ENCODE measurements at regions of chr3 and their contacts with region 1.

Region 1: GRCh38 chr3:180640987-180641386 is 38.3 kb downstream of the CCDC39 start:
- DNase-seq: no peak
- H3K4me3 ChIP-seq: no peak overlapping the region
- H3K27ac ChIP-seq: no peak overlapping the region
- H3K4me1 ChIP-seq: no peaks in the 10 kb centered on the region
- H3K27me3 ChIP-seq: no peaks in the 10 kb centered on the region
- CTCF ChIP-seq: no peak
- POLR2A ChIP-seq: no peak

Region 2: GRCh38 chr3:180467177-180467576 is 173.8 kb before region 1 on chr3:
- intact Hi-C with region 1: no loop called
- DNase-seq: no peak
- H3K4me3 ChIP-seq: no peak overlapping the region
- H3K27ac ChIP-seq: no peak overlapping the region
- H3K4me1 ChIP-seq: no peaks in the 10 kb centered on the region
- H3K27me3 ChIP-seq: no peaks in the 10 kb centered on the region
- CTCF ChIP-seq: no peak
- POLR2A ChIP-seq: no peak

Region 3: DNA sequence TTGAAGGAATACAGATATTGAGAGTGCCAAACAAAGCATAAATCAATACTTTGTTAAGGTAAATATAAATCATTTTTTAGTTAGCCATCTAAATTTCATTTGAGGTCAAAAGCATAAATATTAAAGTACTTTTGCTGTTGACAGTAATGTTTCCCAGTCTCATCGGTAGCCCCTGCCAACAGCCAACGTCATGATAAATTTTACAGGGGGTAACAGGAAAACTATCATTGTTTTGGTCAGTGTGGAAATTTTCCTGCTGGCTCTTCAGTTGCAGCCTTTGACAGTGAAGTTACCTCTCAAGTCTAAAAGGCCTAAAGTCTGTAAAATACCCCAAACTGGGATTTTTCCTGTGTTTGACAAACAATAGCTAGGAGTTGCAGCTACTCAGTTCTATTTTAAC is 76.3 kb before region 1 on chr3:
- intact Hi-C with region 1: loop called (anchors 5 kb)
- DNase-seq: no peak
- H3K4me3 ChIP-seq: no peak overlapping the region
- H3K27ac ChIP-seq: no peak overlapping the region
- H3K4me1 ChIP-seq: no peaks in the 10 kb centered on the region
- H3K27me3 ChIP-seq: no peaks in the 10 kb centered on the region
- CTCF ChIP-seq: no peak
- POLR2A ChIP-seq: no peak

Region 4: DNA sequence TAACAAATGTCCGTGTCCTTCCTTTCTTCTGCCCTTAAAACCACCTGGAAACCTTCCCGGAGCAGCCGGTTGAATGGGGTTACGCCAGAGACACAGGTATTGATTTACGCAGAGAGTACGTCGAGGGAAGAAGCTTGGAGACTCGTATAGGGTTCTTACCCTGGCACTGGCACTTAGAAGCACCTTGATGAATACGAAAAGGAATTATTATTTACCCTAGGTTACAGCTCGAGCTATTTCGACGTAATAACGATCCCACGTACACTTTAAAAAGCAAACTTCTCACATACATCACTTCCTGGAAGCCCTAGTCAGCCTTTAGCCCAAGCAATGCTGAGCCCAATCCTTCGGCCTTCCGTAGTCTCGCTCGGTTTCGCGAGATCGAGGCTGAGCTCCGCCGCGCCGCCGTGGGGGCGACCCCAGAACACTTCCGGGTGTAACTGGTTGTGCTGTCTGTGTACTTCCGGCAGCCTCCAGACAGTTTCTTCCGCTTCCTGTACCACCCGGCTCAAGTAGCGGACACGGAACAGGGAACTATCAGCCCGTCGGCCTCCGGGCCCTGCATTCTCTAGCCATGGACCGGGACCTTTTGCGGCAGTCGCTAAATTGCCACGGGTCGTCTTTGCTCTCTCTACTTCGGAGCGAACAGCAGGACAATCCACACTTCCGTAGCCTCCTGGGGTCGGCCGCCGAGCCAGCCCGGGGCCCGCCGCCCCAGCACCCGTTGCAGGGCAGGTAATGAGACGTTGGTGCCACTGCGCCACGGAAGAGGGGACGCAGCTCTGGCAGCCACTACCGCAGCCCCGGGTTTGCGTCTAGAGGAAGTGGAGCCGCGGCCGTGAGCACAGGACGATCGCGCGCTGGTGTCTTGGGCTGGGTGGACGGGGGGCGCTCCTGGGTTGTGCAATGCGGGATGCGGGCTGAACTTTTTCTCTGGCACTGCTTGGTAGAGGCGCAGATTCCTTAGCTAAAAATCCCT is 39.0 kb before region 1 on chr3 and contains the start of gene TTC14:
- intact Hi-C with region 1: no loop called
- DNase-seq: peak in 1 of 2 donors; percentile 92
- H3K4me3 ChIP-seq: peak within 1 kb of the TSS; percentile 89 to 94
- H3K27ac ChIP-seq: peak within 1 kb of the TSS; percentile 24
- H3K4me1 ChIP-seq: peaks cover 10% of the 10 kb centered on the region
- H3K27me3 ChIP-seq: no peaks in the 10 kb centered on the region
- CTCF ChIP-seq: no peak
- POLR2A ChIP-seq: no peak
- total RNA-seq, gene TTC14: 60.4 TPM